Gastrocnemius medialis (tissue), 4 donors: ENCODE measurements at regions of chr1 and their contacts with region 1.

Region 1: DNA sequence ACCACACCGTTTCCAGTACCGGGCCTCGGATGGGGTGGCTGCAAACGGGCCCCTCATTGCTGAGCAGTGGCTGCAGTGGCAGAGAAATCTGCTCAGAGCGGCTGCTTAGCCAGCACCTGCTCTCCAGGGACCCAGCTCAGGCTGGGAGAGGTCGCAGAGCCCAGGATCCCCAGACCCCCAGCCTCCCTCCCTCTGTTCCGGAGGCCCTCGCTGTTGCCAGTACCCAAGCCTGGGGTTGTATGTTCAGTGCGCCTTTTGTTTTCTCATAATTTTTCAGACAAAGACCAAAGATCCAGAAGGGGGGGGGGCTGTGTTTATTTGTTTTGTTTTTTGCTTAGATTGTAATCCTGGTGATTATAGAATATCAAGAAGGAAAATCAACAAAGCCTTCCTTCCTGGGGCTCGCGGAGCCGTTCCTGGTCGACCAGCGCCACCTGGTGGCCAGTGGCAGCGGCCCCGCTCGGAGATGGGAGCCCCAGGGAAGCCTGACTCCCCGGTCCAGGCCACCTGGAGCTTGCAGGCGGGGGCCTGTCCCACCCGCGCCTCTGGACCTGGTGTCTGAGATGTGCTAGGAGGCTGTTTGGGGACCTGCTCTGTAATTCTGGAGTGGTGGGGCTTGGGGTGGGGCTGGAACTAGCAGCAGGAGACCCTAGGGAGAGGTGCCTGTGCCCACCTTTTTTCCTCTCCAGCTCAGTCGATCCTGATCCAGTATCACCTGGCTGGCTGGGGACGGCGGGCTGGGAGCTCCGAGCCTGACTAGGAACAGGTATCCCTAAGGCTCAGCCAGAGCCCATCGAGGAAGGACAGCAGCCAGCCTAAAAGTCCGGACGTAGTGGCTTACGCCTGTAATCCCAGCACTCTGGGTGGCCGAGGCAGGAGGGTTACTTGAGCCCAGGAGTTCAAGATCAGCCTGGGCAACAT is 123.9 kb upstream of the VAMP3 start:
- DNase-seq: peak in 1 of 2 donors; percentile 43
- ATAC-seq: peak; percentile 32 to 35
- H3K4me3 ChIP-seq: no peak overlapping the region
- H3K27ac ChIP-seq: no peak overlapping the region
- H3K4me1 ChIP-seq: peaks cover 19 to 20% of the 10 kb centered on the region in 2 donors
- H3K27me3 ChIP-seq: no peaks in the 10 kb centered on the region
- CTCF ChIP-seq: peak; percentile 74 to 97 (median 92)
- POLR2A ChIP-seq: no peak

Region 2: GRCh38 chr1:6701437-6702153 is 945.6 kb before region 1 on chr1 and contains the start of gene DNAJC11:
- in situ Hi-C with region 1: loop called in 1 of 4 experiments (anchors 25 kb)
- intact Hi-C with region 1: loop called (anchors 10 kb)
- DNase-seq: peak; percentile 77 to 87
- ATAC-seq: peak; percentile 96 to 97
- H3K4me3 ChIP-seq: peak within 1 kb of the TSS; percentile 91 to 99 (median 96)
- H3K27ac ChIP-seq: peak within 1 kb of the TSS; percentile 80 to 93 (median 88)
- H3K4me1 ChIP-seq: peaks cover 22 to 32% of the 10 kb centered on the region in 2 donors
- H3K27me3 ChIP-seq: no peaks in the 10 kb centered on the region
- CTCF ChIP-seq: peak; percentile 64 to 100 (median 99)
- POLR2A ChIP-seq: peak in 1 of 2 donors; percentile 44
- total RNA-seq, gene DNAJC11: 23.3 to 40.7 (median 30.8) TPM

Region 3: GRCh38 chr1:6889875-6890480 is 757.3 kb before region 1 on chr1:
- in situ Hi-C with region 1: loop called in 1 of 4 experiments (anchors 25 kb)
- intact Hi-C with region 1: no loop called
- DNase-seq: peak in 1 of 2 donors; percentile 25
- ATAC-seq: peak; percentile 71 to 73
- H3K4me3 ChIP-seq: no peak overlapping the region
- H3K27ac ChIP-seq: no peak overlapping the region
- H3K4me1 ChIP-seq: no peaks in the 10 kb centered on the region
- H3K27me3 ChIP-seq: no peaks in the 10 kb centered on the region
- CTCF ChIP-seq: peak; percentile 45 to 80 (median 70)
- POLR2A ChIP-seq: no peak

Region 4: DNA sequence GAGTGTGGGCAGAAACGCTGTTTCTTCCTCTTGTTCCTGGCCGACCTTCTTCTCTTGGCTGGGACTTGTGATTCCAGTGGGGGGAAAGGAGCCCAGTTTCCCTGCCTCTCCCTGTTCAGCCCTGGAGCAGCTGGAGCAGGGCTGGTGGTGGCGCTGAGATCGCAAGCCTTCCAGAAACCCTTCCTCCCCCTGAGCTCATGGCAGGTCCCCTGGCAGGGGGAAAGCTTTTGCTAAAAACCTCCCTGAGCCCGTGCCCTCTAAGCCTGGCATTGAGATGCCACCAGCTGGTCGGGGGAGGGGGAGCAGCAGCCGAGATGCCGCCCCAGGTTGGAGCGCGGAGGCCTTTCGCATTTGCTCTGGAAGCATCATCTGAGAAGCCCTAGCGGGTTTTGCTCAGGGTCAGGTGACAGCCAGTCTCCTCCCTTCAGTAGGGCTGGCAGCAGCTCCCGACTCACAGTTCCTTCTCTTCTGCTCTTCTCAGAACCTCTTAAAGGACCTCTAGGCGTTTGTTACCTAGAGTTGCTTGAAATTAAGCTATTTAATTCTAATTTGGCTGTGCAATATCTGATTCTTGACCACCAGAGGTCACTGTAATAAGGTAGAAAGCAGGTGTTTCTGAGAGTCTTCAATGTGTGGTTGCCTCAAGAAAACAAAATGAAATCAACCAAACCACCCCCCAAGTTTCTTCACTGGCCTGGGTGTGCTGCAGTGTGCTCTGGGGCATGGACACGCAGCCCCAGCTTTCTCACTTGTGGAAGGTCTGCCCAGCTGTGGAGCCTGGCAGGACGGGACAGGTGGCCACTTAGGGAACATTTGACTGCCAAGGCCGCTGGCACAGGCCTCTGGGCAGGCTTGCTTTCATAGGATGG is 604.7 kb before region 1 on chr1:
- in situ Hi-C with region 1: loop called in 3 of 4 experiments (anchors 10 to 25 kb)
- intact Hi-C with region 1: loop called (anchors 2 kb)
- DNase-seq: peak in 1 of 2 donors; percentile 44
- ATAC-seq: peak; percentile 74 to 84
- H3K4me3 ChIP-seq: peak overlapping the region in 2 of 4 donors; percentile 28 to 29
- H3K27ac ChIP-seq: peak overlapping the region in 2 of 4 donors; percentile 10 to 76
- H3K4me1 ChIP-seq: peaks cover 7 to 18% of the 10 kb centered on the region in 2 donors
- H3K27me3 ChIP-seq: no peaks in the 10 kb centered on the region
- CTCF ChIP-seq: peak in 4 of 5 experiments; percentile 46 to 54 (median 50)
- POLR2A ChIP-seq: no peak

Region 5: GRCh38 chr1:7070389-7071029 is 576.7 kb before region 1 on chr1:
- in situ Hi-C with region 1: loop called in 1 of 4 experiments (anchors 25 kb)
- intact Hi-C with region 1: no loop called
- DNase-seq: peak; percentile 47 to 48
- ATAC-seq: peak; percentile 77 to 92
- H3K4me3 ChIP-seq: peak overlapping the region; percentile 35 to 54 (median 42)
- H3K27ac ChIP-seq: no peak overlapping the region
- H3K4me1 ChIP-seq: peaks cover 0 to 5% of the 10 kb centered on the region in 2 donors
- H3K27me3 ChIP-seq: no peaks in the 10 kb centered on the region
- CTCF ChIP-seq: peak; percentile 67 to 88 (median 77)
- POLR2A ChIP-seq: no peak

Region 6: GRCh38 chr1:7224644-7225043 is 422.6 kb before region 1 on chr1:
- in situ Hi-C with region 1: loop called in 1 of 4 experiments (anchors 10 kb)
- intact Hi-C with region 1: loop called (anchors 2 kb)
- DNase-seq: no peak
- ATAC-seq: peak in 1 of 2 donors; percentile 50
- H3K4me3 ChIP-seq: no peak overlapping the region
- H3K27ac ChIP-seq: no peak overlapping the region
- H3K4me1 ChIP-seq: no peaks in the 10 kb centered on the region
- H3K27me3 ChIP-seq: no peaks in the 10 kb centered on the region
- CTCF ChIP-seq: peak in 2 of 5 experiments; percentile 13 to 33
- POLR2A ChIP-seq: no peak

Region 7: DNA sequence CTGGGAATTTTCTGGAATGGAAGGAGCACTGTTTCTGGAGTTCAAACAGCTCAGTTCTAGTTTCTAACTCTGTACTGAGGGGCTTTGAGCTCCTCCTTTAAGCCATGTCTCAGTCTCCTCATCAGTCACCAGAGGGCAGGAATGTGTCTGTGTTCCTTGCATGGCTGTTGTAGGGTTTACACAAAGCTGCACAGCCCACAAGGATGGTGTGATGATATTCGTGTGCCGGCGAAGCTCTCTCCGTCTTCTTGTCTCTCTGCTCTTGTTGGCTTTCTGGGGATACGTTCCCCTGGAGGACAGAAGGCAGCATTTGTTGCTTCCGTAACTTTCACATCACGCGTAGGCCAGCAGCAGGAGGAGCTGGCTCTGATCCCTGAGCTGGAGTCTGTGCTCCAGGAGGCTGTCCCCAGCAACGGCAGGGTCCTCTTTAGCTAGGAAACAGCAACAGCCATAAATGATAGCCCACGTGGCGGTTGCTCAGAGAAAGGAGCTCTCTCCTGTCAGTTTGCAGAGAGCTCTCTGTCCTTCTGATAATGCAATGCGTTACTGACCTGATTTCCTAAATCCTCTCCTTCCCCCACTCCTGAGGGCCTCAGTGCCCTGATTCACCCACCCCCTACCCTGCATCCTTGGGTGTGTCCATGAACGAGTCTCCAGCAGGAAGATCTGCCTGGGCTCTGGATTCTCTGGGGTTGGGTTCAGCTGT is 65.3 kb before region 1 on chr1:
- in situ Hi-C with region 1: no loop called
- intact Hi-C with region 1: no loop called
- DNase-seq: no peak
- ATAC-seq: no peak
- H3K4me3 ChIP-seq: no peak overlapping the region
- H3K27ac ChIP-seq: no peak overlapping the region
- H3K4me1 ChIP-seq: no peaks in the 10 kb centered on the region
- H3K27me3 ChIP-seq: no peaks in the 10 kb centered on the region
- CTCF ChIP-seq: no peak
- POLR2A ChIP-seq: no peak

Region 8: GRCh38 chr1:7717744-7718368 is 70.6 kb after region 1 on chr1:
- in situ Hi-C with region 1: no loop called
- intact Hi-C with region 1: no loop called
- DNase-seq: no peak
- ATAC-seq: no peak
- H3K4me3 ChIP-seq: no peak overlapping the region
- H3K27ac ChIP-seq: no peak overlapping the region
- H3K4me1 ChIP-seq: peaks cover 32 to 36% of the 10 kb centered on the region in 2 donors
- H3K27me3 ChIP-seq: no peaks in the 10 kb centered on the region
- CTCF ChIP-seq: no peak
- POLR2A ChIP-seq: no peak